MCF 10A (cell line): ENCODE measurements at regions of chr13 and their contacts with region 1.

Region 1: DNA sequence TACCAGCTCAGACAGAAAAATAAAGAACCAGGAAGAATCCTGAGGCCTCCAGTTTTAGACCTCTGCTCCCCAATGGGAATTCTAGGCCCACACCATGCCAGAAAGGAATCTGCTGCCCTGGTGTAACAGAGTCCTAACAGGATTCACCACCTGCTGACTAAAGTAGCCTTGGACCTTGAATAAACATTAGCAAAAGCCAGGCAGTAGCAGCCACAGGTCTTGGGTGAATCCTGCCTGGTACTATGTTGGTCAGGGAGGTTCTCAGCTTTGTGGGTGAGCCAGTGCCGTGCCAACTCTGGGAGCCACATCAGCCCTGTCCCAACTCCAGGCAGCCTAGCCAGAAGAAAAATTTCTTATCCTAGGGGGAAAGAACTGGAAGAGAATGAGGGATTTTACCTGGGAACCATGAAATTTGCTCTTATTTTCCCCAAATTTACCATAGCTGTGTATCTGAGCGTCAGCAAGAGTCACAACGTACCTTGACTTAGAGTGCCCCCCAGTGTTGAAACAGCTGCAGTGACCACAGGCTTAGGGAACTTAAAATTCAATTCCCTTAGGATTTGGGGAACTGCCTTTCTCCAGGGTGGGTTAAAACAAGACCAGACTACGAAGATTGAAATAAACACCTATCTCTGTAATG is 1895.6 kb upstream of the PRR20A start:
- DNase-seq: peak; percentile 46
- H3K4me3 Mint-ChIP-seq: no peak overlapping the region
- H3K27ac Mint-ChIP-seq: no peak overlapping the region
- H3K4me1 Mint-ChIP-seq: no peaks in the 10 kb centered on the region
- H3K27me3 Mint-ChIP-seq: peaks cover 3% of the 10 kb centered on the region
- CTCF ChIP-seq: peak; percentile 65

Region 2: GRCh38 chr13:53250266-53250875 is 1994.8 kb before region 1 on chr13:
- CTCF ChIA-PET with region 1: interaction called, 6 read pairs
- POLR2A ChIA-PET with region 1: no interaction called
- intact Hi-C with region 1: loop called (anchors 1 kb)
- DNase-seq: peak; percentile 81
- H3K4me3 Mint-ChIP-seq: no peak overlapping the region
- H3K27ac Mint-ChIP-seq: no peak overlapping the region
- H3K4me1 Mint-ChIP-seq: no peaks in the 10 kb centered on the region
- H3K27me3 Mint-ChIP-seq: peaks cover 10% of the 10 kb centered on the region
- CTCF ChIP-seq: peak; percentile 75

Region 3: GRCh38 chr13:53782488-53782961 is 1462.6 kb before region 1 on chr13:
- CTCF ChIA-PET with region 1: interaction called, 8 read pairs
- POLR2A ChIA-PET with region 1: no interaction called
- intact Hi-C with region 1: loop called (anchors 2 kb)
- DNase-seq: peak; percentile 69
- H3K4me3 Mint-ChIP-seq: peak overlapping the region; percentile 58
- H3K27ac Mint-ChIP-seq: no peak overlapping the region
- H3K4me1 Mint-ChIP-seq: peaks cover 5% of the 10 kb centered on the region
- H3K27me3 Mint-ChIP-seq: peaks cover 33% of the 10 kb centered on the region
- CTCF ChIP-seq: peak; percentile 79

Region 4: GRCh38 chr13:54185785-54186184 is 1059.3 kb before region 1 on chr13:
- CTCF ChIA-PET with region 1: interaction called, 5 read pairs
- POLR2A ChIA-PET with region 1: no interaction called
- intact Hi-C with region 1: loop called (anchors 1 kb)
- DNase-seq: peak; percentile 24
- H3K4me3 Mint-ChIP-seq: no peak overlapping the region
- H3K27ac Mint-ChIP-seq: no peak overlapping the region
- H3K4me1 Mint-ChIP-seq: no peaks in the 10 kb centered on the region
- H3K27me3 Mint-ChIP-seq: no peaks in the 10 kb centered on the region
- CTCF ChIP-seq: peak; percentile 37

Region 5: GRCh38 chr13:54449922-54450321 is 795.2 kb before region 1 on chr13:
- CTCF ChIA-PET with region 1: no interaction called
- POLR2A ChIA-PET with region 1: no interaction called
- intact Hi-C with region 1: loop called (anchors 2 kb)
- DNase-seq: peak; percentile 1
- H3K4me3 Mint-ChIP-seq: no peak overlapping the region
- H3K27ac Mint-ChIP-seq: no peak overlapping the region
- H3K4me1 Mint-ChIP-seq: no peaks in the 10 kb centered on the region
- H3K27me3 Mint-ChIP-seq: no peaks in the 10 kb centered on the region
- CTCF ChIP-seq: peak; percentile 25

Region 6: GRCh38 chr13:54733639-54734038 is 511.5 kb before region 1 on chr13:
- CTCF ChIA-PET with region 1: interaction called, 11 read pairs
- POLR2A ChIA-PET with region 1: no interaction called
- intact Hi-C with region 1: loop called (anchors 5 kb)
- DNase-seq: peak; percentile 13
- H3K4me3 Mint-ChIP-seq: no peak overlapping the region
- H3K27ac Mint-ChIP-seq: no peak overlapping the region
- H3K4me1 Mint-ChIP-seq: peaks cover 6% of the 10 kb centered on the region
- H3K27me3 Mint-ChIP-seq: no peaks in the 10 kb centered on the region
- CTCF ChIP-seq: peak; percentile 6

Region 7: DNA sequence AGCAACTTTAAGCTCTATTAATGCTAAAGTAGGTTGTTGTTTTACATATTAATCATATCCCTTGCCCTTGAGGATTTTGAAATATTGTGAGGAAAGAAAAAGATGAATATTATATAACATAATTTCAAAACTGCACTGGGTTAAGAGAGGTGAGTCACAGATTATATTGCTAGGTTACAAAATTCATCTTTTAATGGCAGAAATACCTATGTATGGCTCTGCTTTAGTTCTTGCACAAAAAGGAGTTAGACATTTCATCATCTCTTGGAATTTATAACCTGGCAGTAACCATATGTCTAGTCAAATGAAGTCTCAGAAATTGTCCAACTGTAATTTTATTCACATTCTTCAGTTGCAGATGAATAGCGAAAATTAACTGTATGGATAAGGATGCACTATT is 175.4 kb before region 1 on chr13:
- CTCF ChIA-PET with region 1: no interaction called
- POLR2A ChIA-PET with region 1: no interaction called
- intact Hi-C with region 1: no loop called
- DNase-seq: peak; percentile 59
- H3K4me3 Mint-ChIP-seq: no peak overlapping the region
- H3K27ac Mint-ChIP-seq: no peak overlapping the region
- H3K4me1 Mint-ChIP-seq: no peaks in the 10 kb centered on the region
- H3K27me3 Mint-ChIP-seq: peaks cover 8% of the 10 kb centered on the region
- CTCF ChIP-seq: no peak

Region 8: DNA sequence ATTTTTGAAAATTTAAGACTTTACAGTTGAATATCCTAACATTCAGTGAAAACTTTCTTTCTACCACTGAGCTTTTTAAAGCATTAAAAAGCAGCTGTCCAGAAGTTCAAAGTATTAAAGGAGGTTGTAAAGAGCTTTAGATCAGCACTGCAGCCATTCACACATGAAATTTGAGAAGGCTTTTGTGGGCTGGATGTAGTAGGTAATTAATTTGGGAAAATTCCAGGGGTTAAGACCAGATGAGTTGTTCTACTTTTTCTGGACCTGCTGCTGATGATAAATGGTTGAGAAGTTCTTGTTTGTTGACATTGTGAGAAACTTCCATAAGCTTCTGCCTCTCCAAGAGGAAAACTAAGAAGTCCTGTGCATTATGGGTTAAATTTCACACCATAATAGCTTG is 116.0 kb after region 1 on chr13:
- CTCF ChIA-PET with region 1: no interaction called
- POLR2A ChIA-PET with region 1: no interaction called
- intact Hi-C with region 1: no loop called
- DNase-seq: peak; percentile 1
- H3K4me3 Mint-ChIP-seq: no peak overlapping the region
- H3K27ac Mint-ChIP-seq: no peak overlapping the region
- H3K4me1 Mint-ChIP-seq: no peaks in the 10 kb centered on the region
- H3K27me3 Mint-ChIP-seq: no peaks in the 10 kb centered on the region
- CTCF ChIP-seq: no peak